ENCODE measurements at regions of chr1 and their contacts with region 1.

Region 1: DNA sequence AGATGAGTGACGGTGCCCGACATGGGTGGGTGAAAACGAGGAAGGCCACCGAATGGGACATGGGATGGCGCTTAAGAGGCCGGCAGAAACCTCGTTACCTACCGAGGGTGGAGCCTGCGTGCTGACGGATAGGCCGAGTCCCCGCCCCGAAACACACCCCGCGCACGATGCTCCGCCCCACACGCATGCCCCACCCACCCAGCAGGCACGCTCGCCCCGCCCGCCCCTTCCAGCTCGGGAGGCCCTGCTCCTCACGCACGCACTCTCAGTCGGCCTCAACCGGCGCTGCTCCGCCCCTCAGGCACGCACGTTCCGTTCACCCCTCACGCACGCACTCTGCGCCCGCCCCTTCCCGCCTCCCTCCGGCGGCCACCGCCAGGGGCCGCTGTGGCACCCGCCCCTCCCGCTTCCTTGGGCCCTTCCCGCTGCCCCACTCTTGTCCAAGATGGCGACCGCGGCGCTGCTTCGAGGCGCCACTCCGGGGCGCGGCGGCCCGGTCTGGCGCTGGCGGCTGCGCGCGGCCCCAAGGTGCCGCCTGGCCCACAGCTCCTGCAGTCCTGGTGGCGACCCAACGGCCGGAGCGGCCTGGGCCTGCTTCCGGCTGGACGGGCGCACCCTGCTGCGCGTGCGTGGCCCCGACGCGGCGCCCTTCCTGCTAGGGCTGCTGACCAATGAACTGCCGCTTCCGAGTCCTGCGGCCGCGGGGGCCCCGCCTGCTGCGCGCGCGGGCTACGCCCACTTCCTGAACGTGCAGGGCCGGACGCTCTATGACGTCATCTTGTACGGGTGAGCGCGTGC is at the start of gene IBA57:
- DNase-seq: peak; percentile 97 to 100 (median 100)
- H3K4me3 ChIP-seq: peak within 1 kb of the TSS; percentile 59 to 75 (median 69)
- H3K4me3 Mint-ChIP-seq: peak within 1 kb of the TSS; percentile 77 to 92
- H3K27ac ChIP-seq: peak within 1 kb of the TSS; percentile 97 to 99
- H3K27ac Mint-ChIP-seq: peak within 1 kb of the TSS; percentile 97 to 99 (median 99)
- H3K4me1 ChIP-seq: peaks cover 30 to 35% of the 10 kb centered on the region in 2 donors
- H3K4me1 Mint-ChIP-seq: peaks cover 43% of the 10 kb centered on the region
- H3K27me3 ChIP-seq: peaks cover 0 to 16% of the 10 kb centered on the region in 2 donors
- H3K27me3 Mint-ChIP-seq: peaks cover 2 to 28% (median 11%) of the 10 kb centered on the region in 3 donors
- CTCF ChIP-seq: peak; percentile 78
- polyA plus RNA-seq, gene IBA57: 1.6 to 2.1 (median 1.7) TPM

Region 2: GRCh38 chr1:228082135-228082891 is 83.3 kb before region 1 on chr1 and contains the start of gene ARF1:
- intact Hi-C with region 1: loop called in 1 of 2 experiments (anchors 2 kb)
- DNase-seq: peak; percentile 91 to 94 (median 93)
- H3K4me3 ChIP-seq: peak within 1 kb of the TSS; percentile 89 to 93 (median 90)
- H3K4me3 Mint-ChIP-seq: peak within 1 kb of the TSS; percentile 96 to 97
- H3K27ac ChIP-seq: peak within 1 kb of the TSS; percentile 94 to 96
- H3K27ac Mint-ChIP-seq: peak within 1 kb of the TSS; percentile 96 to 99 (median 98)
- H3K4me1 ChIP-seq: peaks cover 48 to 50% of the 10 kb centered on the region in 2 donors
- H3K4me1 Mint-ChIP-seq: peaks cover 50% of the 10 kb centered on the region
- H3K27me3 ChIP-seq: no peaks in the 10 kb centered on the region
- H3K27me3 Mint-ChIP-seq: peaks cover 0 to 2% (median under 1%) of the 10 kb centered on the region in 3 donors
- CTCF ChIP-seq: no peak
- polyA plus RNA-seq, gene ARF1: 580 to 789 (median 603) TPM

Region 3: GRCh38 chr1:228109073-228109961 is 56.3 kb before region 1 on chr1 and contains the start of gene MRPL55:
- intact Hi-C with region 1: loop called in 1 of 2 experiments (anchors 1 kb)
- DNase-seq: peak; percentile 94 to 98 (median 97)
- H3K4me3 ChIP-seq: peak within 1 kb of the TSS; percentile 83 to 92 (median 91)
- H3K4me3 Mint-ChIP-seq: peak within 1 kb of the TSS; percentile 90 to 92
- H3K27ac ChIP-seq: peak within 1 kb of the TSS; percentile 81 to 98
- H3K27ac Mint-ChIP-seq: peak within 1 kb of the TSS; percentile 89 to 97 (median 95)
- H3K4me1 ChIP-seq: peaks cover 25 to 42% of the 10 kb centered on the region in 2 donors
- H3K4me1 Mint-ChIP-seq: peaks cover 37% of the 10 kb centered on the region
- H3K27me3 ChIP-seq: no peaks in the 10 kb centered on the region
- H3K27me3 Mint-ChIP-seq: no peaks in the 10 kb centered on the region
- CTCF ChIP-seq: no peak
- polyA plus RNA-seq, gene MRPL55: 99.8 to 277 (median 104) TPM

Region 4: DNA sequence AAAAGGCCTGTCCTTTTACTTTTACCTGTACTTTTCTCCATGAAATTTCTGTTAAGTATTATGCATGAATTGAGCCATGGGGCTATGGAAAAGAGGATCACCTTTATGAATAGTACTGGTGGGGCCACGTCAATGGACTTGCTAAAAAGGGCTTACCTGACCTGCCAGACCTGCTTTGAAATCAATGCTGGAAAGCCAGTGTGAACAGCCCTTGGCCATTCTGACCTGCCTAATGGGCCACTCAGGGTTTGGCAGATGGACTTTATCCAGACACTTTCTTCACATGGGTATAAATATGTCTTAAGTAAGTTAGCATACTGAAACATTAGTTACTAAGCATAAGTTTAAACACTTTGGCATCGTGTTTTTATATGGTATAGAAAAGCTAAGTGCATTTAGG is 33.8 kb before region 1 on chr1:
- intact Hi-C with region 1: loop called in 1 of 2 experiments (anchors 5 kb)
- DNase-seq: no peak
- H3K4me3 ChIP-seq: no peak overlapping the region
- H3K4me3 Mint-ChIP-seq: no peak overlapping the region
- H3K27ac ChIP-seq: no peak overlapping the region
- H3K27ac Mint-ChIP-seq: no peak overlapping the region
- H3K4me1 ChIP-seq: peaks cover 10 to 14% of the 10 kb centered on the region in 2 donors
- H3K4me1 Mint-ChIP-seq: peaks cover 20% of the 10 kb centered on the region
- H3K27me3 ChIP-seq: no peaks in the 10 kb centered on the region
- H3K27me3 Mint-ChIP-seq: peaks cover 8 to 12% (median 11%) of the 10 kb centered on the region in 3 donors
- CTCF ChIP-seq: no peak

Region 5: DNA sequence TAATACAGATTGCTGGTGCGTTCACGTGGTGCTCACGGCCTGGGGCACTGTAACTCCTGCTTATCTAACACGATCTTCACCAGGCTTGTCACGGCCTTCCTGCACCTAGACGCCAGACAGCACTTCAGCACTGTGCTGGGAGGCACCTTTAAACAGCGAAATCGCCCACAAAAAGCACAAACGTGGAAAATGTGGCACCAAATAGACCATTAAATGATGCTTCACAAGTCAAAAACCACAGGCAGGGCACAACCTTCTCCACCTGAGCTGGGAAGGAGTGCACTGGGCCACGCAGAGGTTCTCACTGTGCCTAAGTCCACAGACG is 20.0 kb after region 1 on chr1:
- intact Hi-C with region 1: no loop called
- DNase-seq: no peak
- H3K4me3 ChIP-seq: no peak overlapping the region
- H3K4me3 Mint-ChIP-seq: no peak overlapping the region
- H3K27ac ChIP-seq: no peak overlapping the region
- H3K27ac Mint-ChIP-seq: peak overlapping the region in 2 of 7 donors; percentile 17 to 51
- H3K4me1 ChIP-seq: no peaks in the 10 kb centered on the region
- H3K4me1 Mint-ChIP-seq: no peaks in the 10 kb centered on the region
- H3K27me3 ChIP-seq: no peaks in the 10 kb centered on the region
- H3K27me3 Mint-ChIP-seq: peaks cover 0 to 3% (median 2%) of the 10 kb centered on the region in 3 donors
- CTCF ChIP-seq: no peak